ENCODE measurements at regions of chr3 and their contacts with region 1.

Region 1: GRCh38 chr3:58177747-58178527 is 32.8 kb downstream of the DNASE1L3 start:
- DNase-seq: peak; percentile 93 to 96
- H3K4me3 ChIP-seq: peak overlapping the region; percentile 40 to 51 (median 44)
- H3K27ac ChIP-seq: peak overlapping the region; percentile 20 to 88 (median 78)
- H3K4me1 ChIP-seq: peaks cover 52 to 74% (median 58%) of the 10 kb centered on the region in 4 donors
- H3K27me3 ChIP-seq: no peaks in the 10 kb centered on the region
- CTCF ChIP-seq: peak in 5 of 7 experiments; percentile 88 to 96 (median 91)
- EP300 ChIP-seq: no peak
- POLR2A ChIP-seq: no peak

Region 2: GRCh38 chr3:58008140-58009025 is 169.6 kb before region 1 on chr3 and contains the start of gene FLNB:
- intact Hi-C with region 1: loop called (anchors 10 kb)
- DNase-seq: peak; percentile 77 to 93
- H3K4me3 ChIP-seq: peak within 1 kb of the TSS; percentile 69 to 94 (median 88)
- H3K27ac ChIP-seq: peak within 1 kb of the TSS; percentile 86 to 90 (median 89)
- H3K4me1 ChIP-seq: peaks cover 25 to 54% (median 37%) of the 10 kb centered on the region in 4 donors
- H3K27me3 ChIP-seq: no peaks in the 10 kb centered on the region
- CTCF ChIP-seq: peak in 5 of 7 experiments; percentile 73 to 94 (median 82)
- EP300 ChIP-seq: no peak
- POLR2A ChIP-seq: no peak
- total RNA-seq, gene FLNB: 51.3 to 204 (median 112) TPM

Region 3: GRCh38 chr3:58349792-58350626 is 172.1 kb after region 1 on chr3:
- intact Hi-C with region 1: no loop called
- DNase-seq: peak; percentile 51 to 72
- H3K4me3 ChIP-seq: no peak overlapping the region
- H3K27ac ChIP-seq: peak overlapping the region in 2 of 5 donors; percentile 6 to 39
- H3K4me1 ChIP-seq: peaks cover 0 to 48% (median 19%) of the 10 kb centered on the region in 4 donors
- H3K27me3 ChIP-seq: no peaks in the 10 kb centered on the region
- CTCF ChIP-seq: no peak
- EP300 ChIP-seq: no peak
- POLR2A ChIP-seq: no peak